OCI-LY7 (cell line): ENCODE measurements at regions of chr4 and their contacts with region 1.

Region 1: GRCh38 chr4:40515398-40516293 is 114.0 kb downstream of the RBM47 start:
- DNase-seq: peak; percentile 91
- H3K4me3 ChIP-seq: peak overlapping the region; percentile 70
- H3K27ac ChIP-seq: peak overlapping the region; percentile 89
- H3K4me1 ChIP-seq: peaks cover 65% of the 10 kb centered on the region
- CTCF ChIP-seq: no peak

Region 2: DNA sequence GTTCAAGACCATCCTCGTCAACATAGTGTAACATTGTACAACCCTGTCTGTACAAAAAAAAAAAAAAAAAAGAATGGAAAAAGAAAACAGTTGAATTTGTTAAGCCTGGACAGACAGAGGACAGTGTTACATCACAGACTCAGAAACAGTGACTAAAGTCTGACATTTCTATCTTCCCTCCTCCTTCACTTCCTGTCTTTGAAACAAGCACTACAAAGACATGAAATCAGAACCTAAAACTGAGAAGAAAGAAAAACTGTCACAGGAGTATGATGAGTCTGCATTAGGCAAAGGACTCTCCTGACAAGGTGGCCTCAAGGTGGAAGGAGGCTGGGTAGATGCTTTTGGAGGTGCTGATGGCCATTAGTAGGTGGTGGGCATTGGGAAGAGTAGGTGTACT is 12.7 kb before region 1 on chr4:
- CTCF ChIA-PET with region 1: interaction called, 6 read pairs
- POLR2A ChIA-PET with region 1: interaction called, 10 read pairs
- intact Hi-C with region 1: no loop called
- DNase-seq: peak; percentile 33
- H3K4me3 ChIP-seq: no peak overlapping the region
- H3K27ac ChIP-seq: peak overlapping the region; percentile 45
- H3K4me1 ChIP-seq: peaks cover 36% of the 10 kb centered on the region
- CTCF ChIP-seq: no peak

Region 3: GRCh38 chr4:40576631-40577480 is 61.2 kb after region 1 on chr4:
- CTCF ChIA-PET with region 1: no interaction called
- POLR2A ChIA-PET with region 1: interaction called, 3 read pairs
- intact Hi-C with region 1: loop called (anchors 2 kb)
- DNase-seq: peak; percentile 56
- H3K4me3 ChIP-seq: no peak overlapping the region
- H3K27ac ChIP-seq: peak overlapping the region; percentile 25
- H3K4me1 ChIP-seq: peaks cover 47% of the 10 kb centered on the region
- CTCF ChIP-seq: no peak

Region 4: DNA sequence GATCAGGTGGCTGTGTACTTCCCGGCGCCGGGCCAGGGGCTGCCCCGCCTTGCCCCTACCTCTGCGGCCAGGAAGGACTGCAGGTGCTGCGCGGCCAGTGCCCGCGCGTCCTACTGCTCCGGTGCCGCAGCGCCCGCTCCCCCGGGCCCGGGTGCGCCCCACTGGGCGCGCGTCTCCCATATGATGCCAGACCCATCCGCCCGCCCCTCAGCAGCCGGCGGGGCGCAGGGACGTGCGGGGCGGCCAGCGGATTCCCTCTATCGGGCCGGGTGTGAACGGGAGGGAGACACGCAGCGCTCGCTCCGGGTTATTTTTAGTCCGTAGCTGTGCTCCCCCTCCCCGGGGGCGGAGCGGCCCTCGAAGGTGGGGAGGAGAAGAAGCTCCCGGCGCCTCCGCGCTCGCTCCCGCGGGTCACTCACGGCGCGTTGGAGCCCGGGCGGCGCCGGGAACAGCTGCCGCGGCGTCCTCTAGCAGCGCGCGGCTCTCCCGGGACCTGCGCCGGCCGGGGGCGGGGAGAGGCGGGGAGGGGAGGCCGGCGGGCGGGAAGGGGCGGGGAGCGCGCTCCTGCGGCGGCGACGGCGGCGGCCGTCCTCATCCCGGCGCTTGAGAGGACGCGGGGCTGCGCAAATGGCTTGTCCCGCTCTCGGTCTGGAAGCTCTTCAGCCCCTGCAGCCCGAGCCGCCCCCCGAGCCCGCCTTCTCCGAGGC is 844.7 kb after region 1 on chr4:
- CTCF ChIA-PET with region 1: no interaction called
- POLR2A ChIA-PET with region 1: no interaction called
- intact Hi-C with region 1: no loop called
- DNase-seq: no peak
- H3K4me3 ChIP-seq: no peak overlapping the region
- H3K27ac ChIP-seq: no peak overlapping the region
- H3K4me1 ChIP-seq: no peaks in the 10 kb centered on the region
- CTCF ChIP-seq: no peak